Esophagus squamous epithelium (tissue), 5 donors: ENCODE measurements at regions of chr15 and their contacts with region 1.

Region 1: DNA sequence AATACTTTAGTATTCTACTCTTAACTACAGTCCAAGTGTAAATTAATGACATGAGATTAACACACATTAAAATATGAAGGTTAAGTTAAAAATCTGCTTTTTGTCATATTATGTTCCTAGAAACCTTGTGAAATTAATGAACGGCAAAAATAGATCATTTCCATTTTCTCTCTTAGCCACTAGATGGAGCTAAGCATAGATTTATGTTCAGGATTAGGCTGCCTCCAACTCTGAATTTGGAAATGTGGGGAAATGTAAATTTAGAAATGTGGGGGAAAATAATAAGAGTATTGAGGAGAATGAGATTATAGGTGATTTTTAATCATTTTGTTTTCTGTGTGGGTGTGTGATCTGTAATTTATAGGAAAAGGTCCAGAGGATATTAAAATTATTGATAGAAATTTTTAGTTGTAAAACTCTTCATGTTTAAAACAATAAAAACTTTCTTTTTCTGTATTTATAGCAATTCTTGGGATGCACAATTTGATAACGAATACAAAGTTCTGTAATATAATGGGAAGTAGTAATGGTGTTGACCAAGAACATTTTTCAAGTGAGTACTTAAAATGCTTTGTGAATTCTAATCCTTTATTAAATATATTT is 59.2 kb downstream of the TMOD3 start:
- DNase-seq: no peak
- H3K4me3 ChIP-seq: no peak overlapping the region
- H3K27ac ChIP-seq: peak overlapping the region in 1 of 4 donors; percentile 10
- H3K4me1 ChIP-seq: peaks cover 4 to 22% (median 4%) of the 10 kb centered on the region in 3 donors
- H3K27me3 ChIP-seq: no peaks in the 10 kb centered on the region
- CTCF ChIP-seq: peak; percentile 43 to 80 (median 64)
- POLR2A ChIP-seq: no peak

Region 2: GRCh38 chr15:51692154-51692553 is 196.5 kb before region 1 on chr15:
- intact Hi-C with region 1: no loop called
- DNase-seq: no peak
- H3K4me3 ChIP-seq: no peak overlapping the region
- H3K27ac ChIP-seq: no peak overlapping the region
- H3K4me1 ChIP-seq: no peaks in the 10 kb centered on the region
- H3K27me3 ChIP-seq: peaks cover 0 to 12% (median 0%) of the 10 kb centered on the region in 4 donors
- CTCF ChIP-seq: no peak
- POLR2A ChIP-seq: no peak

Region 3: DNA sequence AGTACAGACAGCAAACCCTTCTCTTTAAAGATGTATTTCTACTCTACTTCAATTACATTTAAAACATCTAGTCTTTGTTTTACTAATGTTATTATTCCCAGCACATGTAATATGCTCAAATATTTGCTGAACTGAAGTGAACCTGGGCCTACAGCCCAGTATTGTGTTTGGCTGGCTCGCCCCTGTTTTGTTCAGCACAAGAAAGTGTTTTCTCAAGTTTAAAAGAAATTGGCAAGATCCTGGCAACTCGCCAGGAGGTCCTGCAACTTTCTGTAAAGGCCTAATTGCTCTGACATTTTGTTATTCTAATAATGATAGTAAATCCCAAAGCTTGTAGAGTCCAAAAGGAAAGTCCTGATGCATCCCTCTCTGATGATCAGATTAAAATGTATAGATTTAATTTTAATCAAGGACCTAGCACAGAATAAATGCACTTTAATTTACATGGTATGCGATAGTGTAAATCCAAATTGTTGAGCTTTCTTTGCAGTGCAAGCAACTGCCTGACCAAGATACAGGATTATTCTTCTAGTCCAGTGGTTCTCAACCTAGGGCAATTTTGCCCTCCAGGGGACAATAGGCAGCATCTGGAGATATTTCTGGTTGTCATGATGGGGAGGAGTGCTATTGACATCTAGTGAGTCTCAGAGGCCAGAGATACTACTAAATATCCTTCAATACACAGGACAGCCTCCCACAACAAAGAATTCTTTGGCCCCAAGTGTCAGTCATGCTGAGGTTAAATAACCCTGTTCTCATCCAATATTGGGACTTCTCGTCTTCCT is 95.0 kb before region 1 on chr15:
- intact Hi-C with region 1: loop called (anchors 10 kb)
- DNase-seq: no peak
- H3K4me3 ChIP-seq: no peak overlapping the region
- H3K27ac ChIP-seq: no peak overlapping the region
- H3K4me1 ChIP-seq: peaks cover 0 to 10% (median 3%) of the 10 kb centered on the region in 3 donors
- H3K27me3 ChIP-seq: no peaks in the 10 kb centered on the region
- CTCF ChIP-seq: no peak
- POLR2A ChIP-seq: no peak

Region 4: GRCh38 chr15:52406601-52407000 is 517.9 kb after region 1 on chr15:
- intact Hi-C with region 1: no loop called
- DNase-seq: no peak
- H3K4me3 ChIP-seq: no peak overlapping the region
- H3K27ac ChIP-seq: no peak overlapping the region
- H3K4me1 ChIP-seq: no peaks in the 10 kb centered on the region
- H3K27me3 ChIP-seq: no peaks in the 10 kb centered on the region
- CTCF ChIP-seq: no peak
- POLR2A ChIP-seq: no peak